Sigmoid colon (tissue), 7 donors: ENCODE measurements at regions of chr19 and their contacts with region 1.

Region 1: DNA sequence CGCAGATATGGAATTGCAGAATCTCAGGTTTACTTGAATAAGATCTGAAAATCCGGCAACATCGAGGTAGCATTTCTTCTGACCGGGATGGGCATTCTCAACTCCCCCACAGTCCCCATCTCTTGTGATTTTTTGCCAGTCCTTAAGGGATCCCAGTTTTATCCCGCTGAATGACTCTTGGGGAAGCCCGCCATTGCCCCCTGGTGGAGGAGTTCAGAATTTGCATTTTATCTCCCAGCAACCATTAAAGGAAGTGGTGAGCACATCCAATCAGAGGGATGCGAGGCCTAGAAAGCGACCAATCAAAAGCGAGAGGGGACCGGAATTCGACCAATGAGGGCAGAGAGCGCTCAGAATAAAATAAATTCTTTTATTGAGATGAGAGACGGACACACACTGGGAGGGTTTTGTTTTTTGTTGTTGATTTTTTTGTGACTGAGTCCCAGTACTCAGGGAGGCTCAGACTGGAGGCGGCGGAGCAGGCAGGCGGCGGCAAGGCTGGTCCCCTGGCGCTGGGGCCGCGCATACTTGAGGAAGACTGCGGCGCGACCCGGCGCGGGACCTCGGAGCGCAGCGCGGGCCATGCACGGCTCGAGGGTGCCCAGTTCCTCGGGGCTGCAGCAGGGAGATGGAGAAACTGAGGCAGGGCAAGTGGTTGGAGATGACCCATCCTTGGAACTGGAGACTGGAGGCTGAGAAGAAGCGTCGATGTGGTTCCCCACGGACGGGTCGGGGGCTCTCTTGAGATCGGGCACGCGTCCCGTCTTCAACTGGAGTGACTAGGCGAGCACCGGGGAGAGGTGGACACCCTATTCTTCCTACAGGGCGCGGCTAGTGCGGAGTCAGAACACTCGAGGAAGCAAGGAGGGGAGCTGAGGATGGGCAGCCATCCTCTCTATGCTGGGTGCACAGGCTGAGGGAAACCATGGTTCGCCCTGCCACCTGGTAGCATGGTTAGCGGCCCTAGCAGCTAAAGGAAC is 4.0 kb upstream of the TTC9B start:
- DNase-seq: peak; percentile 92
- H3K4me3 ChIP-seq: no peak overlapping the region
- H3K27ac ChIP-seq: no peak overlapping the region
- H3K4me1 ChIP-seq: peaks cover 0 to 40% (median 26%) of the 10 kb centered on the region in 4 donors
- H3K27me3 ChIP-seq: peaks cover 44 to 90% (median 64%) of the 10 kb centered on the region in 3 donors
- CTCF ChIP-seq: peak; percentile 84 to 91 (median 90)
- EP300 ChIP-seq: no peak
- POLR2A ChIP-seq: no peak

Region 2: DNA sequence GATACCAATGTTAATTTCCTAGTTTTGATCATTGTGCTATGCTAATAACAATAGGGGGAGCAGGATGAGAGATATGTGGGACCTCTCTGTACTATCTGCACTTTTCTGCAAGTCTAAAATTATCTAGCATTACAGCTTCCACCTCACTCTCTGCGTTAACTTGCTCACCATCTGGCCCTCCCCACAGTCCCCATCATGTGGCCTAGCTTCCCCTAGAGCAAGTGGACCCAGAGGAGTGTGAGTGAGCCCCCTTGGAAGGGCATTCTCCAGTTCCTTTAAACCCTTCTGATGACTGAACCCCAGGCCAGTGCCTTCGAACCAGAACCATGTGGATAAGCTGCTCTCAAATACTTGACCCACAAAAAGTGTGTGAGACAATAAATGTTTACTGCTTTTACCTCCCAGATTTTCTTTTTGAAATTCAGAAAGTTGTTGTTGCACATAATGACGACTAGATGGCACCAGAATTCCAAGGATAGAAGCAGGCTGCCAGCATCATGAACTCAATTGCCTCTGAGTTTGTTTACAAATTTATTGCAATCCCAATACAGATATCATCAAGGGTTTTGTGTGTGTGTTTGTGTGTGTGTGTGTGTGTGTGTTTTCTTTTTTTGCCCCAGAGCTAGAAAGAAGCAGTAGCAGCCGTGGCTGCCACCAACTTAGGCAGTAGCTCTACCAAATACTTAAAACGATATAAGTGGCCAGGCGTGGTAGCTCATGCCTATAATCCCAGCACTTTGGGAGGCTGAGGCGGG is 82.4 kb before region 1 on chr19:
- intact Hi-C with region 1: loop called (anchors 1 kb)
- DNase-seq: no peak
- H3K4me3 ChIP-seq: no peak overlapping the region
- H3K27ac ChIP-seq: no peak overlapping the region
- H3K4me1 ChIP-seq: no peaks in the 10 kb centered on the region
- H3K27me3 ChIP-seq: peaks cover 0 to 19% (median 0%) of the 10 kb centered on the region in 3 donors
- CTCF ChIP-seq: peak; percentile 8 to 66 (median 54)
- EP300 ChIP-seq: no peak
- POLR2A ChIP-seq: no peak